ENCODE measurements at regions of chr13 and their contacts with region 1.

Region 1: DNA sequence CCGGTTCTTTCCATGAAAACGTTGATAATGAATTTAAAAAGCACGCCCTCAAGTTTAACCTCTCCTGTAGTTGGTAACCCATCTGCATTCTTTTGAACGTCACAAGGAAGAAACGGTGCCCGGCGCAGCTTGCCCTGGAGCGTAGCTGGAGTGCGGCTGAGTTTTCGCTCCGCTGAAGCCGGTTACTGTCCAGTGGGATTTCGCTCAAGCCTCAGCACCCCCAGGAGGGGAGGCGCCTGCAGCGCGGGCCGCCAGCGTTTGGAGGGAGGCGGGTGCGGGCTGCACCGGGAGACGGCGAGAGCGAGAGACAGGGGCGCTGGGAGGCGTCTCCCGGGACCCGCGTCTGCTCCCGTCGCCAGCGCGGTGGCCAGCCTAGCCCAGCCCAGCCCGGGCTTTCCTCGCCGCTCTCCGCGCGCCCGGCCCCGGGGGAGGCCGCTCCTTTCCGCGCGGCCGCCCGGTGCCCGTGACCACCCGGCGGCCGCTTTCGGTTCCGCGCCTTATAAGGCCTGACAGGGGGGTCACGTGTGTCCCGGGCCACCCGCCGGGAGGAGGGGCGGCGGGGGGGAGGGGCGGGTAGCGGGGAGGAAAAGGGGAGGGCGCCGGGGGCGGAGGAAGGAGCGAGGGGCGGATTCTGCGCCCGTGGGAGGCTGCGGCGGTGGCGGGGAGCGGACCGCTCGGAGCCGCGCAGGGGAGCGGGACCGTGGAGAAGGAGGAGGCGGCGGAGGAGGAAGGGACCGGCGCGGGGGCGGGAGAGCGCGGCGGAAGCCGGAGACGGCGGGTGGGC is 8.3 kb upstream of the DGKH start:
- DNase-seq: peak; percentile 50 to 80
- H3K4me3 ChIP-seq: peak overlapping the region; percentile 61
- H3K27ac ChIP-seq: peak overlapping the region; percentile 56
- H3K4me1 ChIP-seq: peaks cover 10% of the 10 kb centered on the region
- H3K27me3 ChIP-seq: no peaks in the 10 kb centered on the region
- CTCF ChIP-seq: no peak

Region 2: GRCh38 chr13:41668130-41668757 is 371.9 kb before region 1 on chr13:
- CTCF ChIA-PET with region 1: no interaction called
- POLR2A ChIA-PET with region 1: no interaction called
- intact Hi-C with region 1: loop called (anchors 10 kb)
- DNase-seq: peak; percentile 37 to 88
- H3K4me3 ChIP-seq: no peak overlapping the region
- H3K27ac ChIP-seq: no peak overlapping the region
- H3K4me1 ChIP-seq: peaks cover 4% of the 10 kb centered on the region; the same call in 1 of the 2 replicates
- H3K27me3 ChIP-seq: no peaks in the 10 kb centered on the region
- CTCF ChIP-seq: peak; percentile 76

Region 3: DNA sequence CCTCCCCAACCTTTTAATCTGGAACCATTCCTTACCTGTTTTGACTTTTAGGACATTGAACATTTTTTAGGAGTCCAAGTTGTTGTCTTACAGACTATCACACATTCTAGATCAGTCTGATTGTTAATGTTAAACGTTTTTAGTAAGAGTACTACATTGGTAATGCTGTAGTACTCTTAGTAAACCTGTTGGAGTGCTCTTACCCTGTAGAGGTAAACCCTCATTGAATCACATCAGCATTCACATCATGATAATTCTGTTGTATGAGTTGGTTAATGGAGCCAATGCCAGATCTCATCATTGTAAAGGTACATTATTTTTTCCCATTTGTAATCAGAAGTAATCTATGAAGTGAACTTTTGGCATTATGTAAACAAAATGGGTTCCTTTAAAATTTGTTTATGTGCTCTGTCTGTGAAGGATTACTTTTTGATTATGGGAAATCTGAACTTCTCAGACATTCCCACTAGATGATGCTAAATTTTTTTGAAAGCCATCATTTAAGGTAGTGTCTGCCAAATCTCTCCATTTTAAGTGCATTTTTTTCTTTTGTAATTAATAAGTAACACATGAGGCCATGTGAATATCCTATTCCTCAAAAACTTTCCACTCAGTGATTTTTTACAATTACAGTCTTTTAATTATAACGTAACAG is 134.4 kb before region 1 on chr13:
- CTCF ChIA-PET with region 1: no interaction called
- POLR2A ChIA-PET with region 1: interaction called, 10 read pairs
- intact Hi-C with region 1: loop called (anchors 5 kb)
- DNase-seq: no peak
- H3K4me3 ChIP-seq: no peak overlapping the region
- H3K27ac ChIP-seq: no peak overlapping the region
- H3K4me1 ChIP-seq: no peaks in the 10 kb centered on the region
- H3K27me3 ChIP-seq: no peaks in the 10 kb centered on the region
- CTCF ChIP-seq: peak; percentile 63

Region 4: GRCh38 chr13:41960639-41961465 is 79.3 kb before region 1 on chr13 and contains the start of gene VWA8:
- CTCF ChIA-PET with region 1: interaction called, 3 read pairs
- POLR2A ChIA-PET with region 1: no interaction called
- intact Hi-C with region 1: loop called (anchors 2 kb)
- DNase-seq: peak in 1 of 2 experiments; percentile 68
- H3K4me3 ChIP-seq: peak within 1 kb of the TSS; percentile 93
- H3K27ac ChIP-seq: peak within 1 kb of the TSS; percentile 48; the same call in 1 of the 2 replicates
- H3K4me1 ChIP-seq: peaks cover 13% of the 10 kb centered on the region
- H3K27me3 ChIP-seq: no peaks in the 10 kb centered on the region
- CTCF ChIP-seq: no peak
- total RNA-seq, gene VWA8: 11.5 and 14.1 TPM in 2 replicates

Region 5: DNA sequence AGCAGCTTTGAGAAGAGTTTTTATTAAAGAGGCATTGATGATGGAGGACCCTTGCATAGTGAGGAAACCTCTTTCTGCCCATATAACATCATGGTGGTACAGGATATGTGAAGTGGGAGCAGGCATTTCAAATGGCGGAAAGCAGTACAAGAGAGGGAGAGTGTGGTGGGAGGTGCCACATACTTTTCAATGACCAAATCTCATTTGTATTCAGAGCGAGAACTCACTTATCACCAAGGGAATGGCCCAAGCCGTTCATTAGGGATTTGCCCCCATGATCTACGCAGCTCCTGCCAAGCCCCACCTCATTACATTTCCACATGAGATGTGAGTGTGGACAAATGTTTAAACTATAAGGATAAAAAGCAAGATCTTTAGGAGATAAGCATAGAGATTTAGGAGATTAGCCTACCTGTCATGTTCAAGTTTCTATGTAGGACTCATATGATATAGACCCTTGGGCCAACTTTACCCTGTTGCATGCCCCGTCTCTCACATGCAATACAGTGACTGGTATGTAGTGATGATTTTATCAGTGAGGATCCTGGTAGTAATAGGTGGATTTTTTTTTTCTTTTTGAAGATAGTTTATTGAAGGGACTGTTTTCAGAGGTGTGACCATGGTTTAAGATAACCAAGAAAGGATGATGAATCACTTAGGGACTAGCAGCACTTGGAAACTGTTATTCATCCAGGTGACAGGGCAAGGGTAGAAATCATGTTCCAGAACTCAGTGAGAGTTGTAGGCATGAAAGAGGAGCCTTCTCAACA is 1021.5 kb after region 1 on chr13:
- CTCF ChIA-PET with region 1: no interaction called
- POLR2A ChIA-PET with region 1: no interaction called
- intact Hi-C with region 1: no loop called
- DNase-seq: peak in 1 of 2 experiments; percentile 59
- H3K4me3 ChIP-seq: no peak overlapping the region
- H3K27ac ChIP-seq: peak overlapping the region; percentile 53
- H3K4me1 ChIP-seq: peaks cover 39% of the 10 kb centered on the region
- H3K27me3 ChIP-seq: no peaks in the 10 kb centered on the region
- CTCF ChIP-seq: no peak

Measured in PC-9 (cell line).